ENCODE measurements at regions of chr22 and their contacts with region 1.

Region 1: DNA sequence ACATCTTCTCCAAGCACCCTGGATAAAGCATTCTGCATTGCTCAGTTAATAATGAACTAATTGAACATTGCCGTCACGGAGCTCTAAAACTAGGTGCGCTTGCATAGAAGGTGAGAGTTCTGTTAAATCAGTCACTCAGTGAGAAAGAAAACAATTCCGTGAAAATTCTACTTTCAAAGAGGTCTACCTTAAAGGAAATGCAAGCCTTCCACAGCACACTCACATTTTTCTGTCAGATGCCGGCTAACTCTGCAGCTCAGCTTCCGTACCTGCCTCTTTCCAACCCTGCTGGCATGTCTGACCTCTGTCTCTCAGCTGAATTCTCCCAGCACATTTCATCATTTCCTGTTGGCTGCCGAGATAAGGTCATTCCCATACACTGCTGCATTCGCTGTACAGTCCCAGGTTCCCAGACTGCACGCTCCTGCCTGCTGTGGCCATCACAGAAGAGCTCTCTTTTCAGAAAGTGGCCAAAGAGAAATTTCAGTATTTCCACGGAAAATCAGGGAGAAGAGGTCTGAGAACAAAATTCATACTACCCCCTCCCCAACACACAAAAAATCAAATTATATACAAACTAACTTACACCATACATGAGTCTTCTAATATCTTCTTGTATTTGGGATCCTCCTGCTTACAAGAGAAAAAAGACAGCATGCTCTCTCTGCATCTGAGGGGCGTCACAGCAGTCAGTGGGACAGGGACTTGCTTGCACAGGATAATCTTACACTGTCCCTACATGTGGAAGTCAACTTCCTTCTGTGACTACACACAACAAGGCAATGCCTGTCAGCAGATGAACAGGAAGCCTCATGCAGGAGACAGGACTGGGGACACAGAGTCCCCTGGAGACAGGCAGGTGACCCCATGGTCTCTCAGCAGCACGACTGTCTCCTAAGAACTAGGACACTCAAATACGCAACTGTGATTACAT is 55.1 kb downstream of the PACSIN2 start:
- DNase-seq: peak; percentile 72 to 77
- H3K4me3 ChIP-seq: peak overlapping the region; percentile 40 to 41
- H3K27ac ChIP-seq: peak overlapping the region; percentile 39 to 46
- H3K4me1 ChIP-seq: peaks cover 0 to 84% (median 48%) of the 10 kb centered on the region in 4 donors
- H3K27me3 ChIP-seq: no peaks in the 10 kb centered on the region
- CTCF ChIP-seq: no peak

Region 2: GRCh38 chr22:42901790-42902508 is 57.9 kb before region 1 on chr22:
- intact Hi-C with region 1: loop called (anchors 10 kb)
- DNase-seq: no peak
- H3K4me3 ChIP-seq: no peak overlapping the region
- H3K27ac ChIP-seq: peak overlapping the region; percentile 33 to 50
- H3K4me1 ChIP-seq: peaks cover 0 to 58% (median 48%) of the 10 kb centered on the region in 4 donors
- H3K27me3 ChIP-seq: no peaks in the 10 kb centered on the region
- CTCF ChIP-seq: peak in 1 of 2 experiments; percentile 6